ENCODE measurements at regions of chr16 and their contacts with region 1.

Region 1: GRCh38 chr16:67608364-67608763 is 36.6 kb upstream of the CARMIL2 start:
- DNase-seq: no peak
- ATAC-seq: no peak
- H3K4me3 ChIP-seq: no peak overlapping the region
- H3K27ac ChIP-seq: no peak overlapping the region
- H3K4me1 ChIP-seq: no peaks in the 10 kb centered on the region
- CTCF ChIP-seq: no peak
- EP300 ChIP-seq: no peak
- POLR2A ChIP-seq: no peak
- RAD21 ChIP-seq: no peak

Region 2: GRCh38 chr16:66660422-66661209 is 947.7 kb before region 1 on chr16:
- CTCF ChIA-PET with region 1: no interaction called
- POLR2A ChIA-PET with region 1: no interaction called
- DNase-seq: peak; percentile 72 to 84
- ATAC-seq: peak; percentile 96 to 97
- H3K4me3 ChIP-seq: peak overlapping the region; percentile 5; the same call in 1 of the 3 replicates
- H3K27ac ChIP-seq: peak overlapping the region; percentile 72 to 86
- H3K4me1 ChIP-seq: peaks cover 30% of the 10 kb centered on the region
- CTCF ChIP-seq: no peak
- EP300 ChIP-seq: no peak
- POLR2A ChIP-seq: no peak
- RAD21 ChIP-seq: 0 out of 5 replicates have a peak, but pooled peaks of 1 of the 2 experiments have one; percentile 24

Region 3: GRCh38 chr16:67595033-67595355 is 13.4 kb before region 1 on chr16:
- CTCF ChIA-PET with region 1: interaction called, 7 read pairs
- POLR2A ChIA-PET with region 1: interaction called, 10 read pairs
- DNase-seq: no peak
- ATAC-seq: peak; percentile 50 to 54; a peak in 3 of 6 replicates
- H3K4me3 ChIP-seq: no peak overlapping the region
- H3K27ac ChIP-seq: no peak overlapping the region; a peak in 1 of 6 replicates
- H3K4me1 ChIP-seq: peaks cover 9% of the 10 kb centered on the region; the same call in 1 of the 3 replicates
- CTCF ChIP-seq: no peak
- EP300 ChIP-seq: no peak
- POLR2A ChIP-seq: no peak
- RAD21 ChIP-seq: no peak

Region 4: GRCh38 chr16:67632415-67633172 is 24.2 kb after region 1 on chr16:
- CTCF ChIA-PET with region 1: no interaction called
- POLR2A ChIA-PET with region 1: no interaction called
- DNase-seq: no peak
- ATAC-seq: no peak
- H3K4me3 ChIP-seq: no peak overlapping the region
- H3K27ac ChIP-seq: no peak overlapping the region
- H3K4me1 ChIP-seq: no peaks in the 10 kb centered on the region
- CTCF ChIP-seq: no peak
- EP300 ChIP-seq: no peak
- POLR2A ChIP-seq: no peak
- RAD21 ChIP-seq: no peak

Region 5: DNA sequence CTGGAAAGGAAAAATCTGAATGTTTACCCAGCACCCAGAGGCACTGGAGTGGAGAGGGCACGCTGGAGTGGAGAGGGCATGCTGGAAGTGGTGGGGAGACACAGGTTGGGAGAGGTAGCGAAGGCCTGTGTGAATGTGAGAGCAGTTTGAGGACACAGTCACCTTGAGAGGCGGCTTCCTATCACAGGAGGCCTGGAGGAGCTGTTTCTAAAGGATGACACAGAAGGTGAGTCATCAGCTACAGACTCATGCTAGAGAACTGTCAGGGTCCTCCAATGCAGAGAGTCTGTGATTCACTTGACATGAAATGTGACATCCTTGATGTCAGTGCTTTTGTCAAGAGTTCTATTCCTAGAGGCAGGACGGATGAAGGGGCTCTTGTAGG is 309.5 kb after region 1 on chr16:
- CTCF ChIA-PET with region 1: no interaction called
- POLR2A ChIA-PET with region 1: no interaction called
- DNase-seq: peak; percentile 62 to 88
- ATAC-seq: peak; percentile 89 to 90
- H3K4me3 ChIP-seq: no peak overlapping the region
- H3K27ac ChIP-seq: peak overlapping the region in 1 of 2 experiments; percentile 2; a peak in 1 of 6 replicates
- H3K4me1 ChIP-seq: peaks cover 16% of the 10 kb centered on the region
- CTCF ChIP-seq: no peak
- EP300 ChIP-seq: no peak
- POLR2A ChIP-seq: no peak
- RAD21 ChIP-seq: no peak